B cell (primary cell): ENCODE measurements at regions of chr6 and their contacts with region 1.

Region 1: GRCh38 chr6:151390276-151391032 is 905 bp downstream of the ZBTB2 start:
- DNase-seq: peak; percentile 100
- ATAC-seq: peak; percentile 73
- H3K4me3 ChIP-seq: peak overlapping the region in 4 of 5 experiments; percentile 67 to 95 (median 82)
- H3K4me3 Mint-ChIP-seq: peak overlapping the region; percentile 99
- H3K27ac ChIP-seq: peak overlapping the region; percentile 77 to 97
- H3K27ac Mint-ChIP-seq: peak overlapping the region; percentile 98
- H3K4me1 ChIP-seq: peaks cover 38 to 39% of the 10 kb centered on the region in 2 donors
- H3K4me1 Mint-ChIP-seq: peaks cover 46% of the 10 kb centered on the region
- H3K27me3 ChIP-seq: no peaks in the 10 kb centered on the region
- H3K27me3 Mint-ChIP-seq: no peaks in the 10 kb centered on the region
- CTCF ChIP-seq: no peak

Region 2: GRCh38 chr6:151209071-151209831 is 181.2 kb before region 1 on chr6:
- CTCF ChIA-PET with region 1: no interaction called
- POLR2A ChIA-PET with region 1: no interaction called
- intact Hi-C with region 1: no loop called
- DNase-seq: no peak
- ATAC-seq: no peak
- H3K4me3 ChIP-seq: no peak overlapping the region
- H3K4me3 Mint-ChIP-seq: no peak overlapping the region
- H3K27ac ChIP-seq: no peak overlapping the region
- H3K27ac Mint-ChIP-seq: no peak overlapping the region
- H3K4me1 ChIP-seq: no peaks in the 10 kb centered on the region
- H3K4me1 Mint-ChIP-seq: no peaks in the 10 kb centered on the region
- H3K27me3 ChIP-seq: peaks cover 0 to 3% (median 0%) of the 10 kb centered on the region in 4 experiments
- H3K27me3 Mint-ChIP-seq: peaks cover 10% of the 10 kb centered on the region
- CTCF ChIP-seq: no peak

Region 3: DNA sequence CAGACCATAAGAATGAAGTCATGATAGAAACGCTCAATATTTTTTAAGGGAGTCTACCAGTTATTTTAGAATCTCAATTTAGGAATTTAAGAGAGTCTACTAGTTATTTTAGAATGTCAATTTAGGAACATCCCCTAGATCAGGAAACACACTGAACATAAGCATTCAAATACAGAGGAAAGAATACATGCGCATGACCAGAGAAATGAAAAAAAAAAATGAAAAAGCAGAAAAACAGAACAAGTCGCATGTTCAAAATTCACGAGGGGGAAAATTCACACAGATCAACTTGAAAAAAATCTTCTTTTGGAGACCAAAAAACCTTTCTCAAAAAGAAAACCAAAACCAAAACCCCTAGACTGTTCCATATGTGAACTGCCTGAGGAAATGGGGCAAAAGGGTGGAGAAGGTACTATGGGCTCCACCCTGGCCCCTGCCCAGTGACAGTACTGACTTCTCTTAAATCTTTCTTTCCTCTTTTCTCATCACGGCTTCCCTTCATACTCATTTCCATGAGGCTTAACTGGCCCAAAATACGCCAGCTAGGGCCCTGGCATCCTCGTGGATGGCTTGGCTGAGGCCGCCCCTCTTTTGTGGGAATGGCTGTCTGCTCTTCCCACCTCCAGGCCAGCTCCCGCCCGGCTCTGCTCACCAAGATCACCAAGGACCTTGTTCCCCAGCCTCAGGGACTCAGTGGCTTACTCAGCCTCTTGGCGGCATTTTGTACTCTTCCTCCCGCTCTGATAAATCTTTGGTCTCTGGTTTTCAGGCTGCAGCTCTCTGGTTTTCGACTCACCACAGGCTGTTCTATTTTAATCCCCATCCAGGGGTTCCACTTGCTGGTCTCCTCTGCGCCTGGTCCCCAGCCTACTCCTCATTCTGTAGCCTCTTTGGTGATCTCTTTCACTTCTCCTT is 10.3 kb before region 1 on chr6:
- CTCF ChIA-PET with region 1: no interaction called
- POLR2A ChIA-PET with region 1: interaction called, 3 read pairs
- intact Hi-C with region 1: loop called (anchors 1 kb)
- DNase-seq: peak; percentile 50
- ATAC-seq: peak; percentile 76
- H3K4me3 ChIP-seq: peak overlapping the region in 4 of 5 experiments; percentile 11 to 34 (median 24)
- H3K4me3 Mint-ChIP-seq: peak overlapping the region; percentile 68
- H3K27ac ChIP-seq: peak overlapping the region; percentile 58 to 66
- H3K27ac Mint-ChIP-seq: peak overlapping the region; percentile 84
- H3K4me1 ChIP-seq: peaks cover 43 to 46% of the 10 kb centered on the region in 2 donors
- H3K4me1 Mint-ChIP-seq: peaks cover 63% of the 10 kb centered on the region
- H3K27me3 ChIP-seq: no peaks in the 10 kb centered on the region
- H3K27me3 Mint-ChIP-seq: no peaks in the 10 kb centered on the region
- CTCF ChIP-seq: no peak

Region 4: GRCh38 chr6:151409260-151409659 is 18.8 kb after region 1 on chr6:
- CTCF ChIA-PET with region 1: interaction called, 25 read pairs
- POLR2A ChIA-PET with region 1: interaction called, 5 read pairs
- intact Hi-C with region 1: no loop called
- DNase-seq: no peak
- ATAC-seq: no peak
- H3K4me3 ChIP-seq: no peak overlapping the region
- H3K4me3 Mint-ChIP-seq: no peak overlapping the region
- H3K27ac ChIP-seq: peak overlapping the region in 1 of 2 donors; percentile 47
- H3K27ac Mint-ChIP-seq: peak overlapping the region; percentile 47
- H3K4me1 ChIP-seq: peaks cover 6 to 14% of the 10 kb centered on the region in 2 donors
- H3K4me1 Mint-ChIP-seq: peaks cover 19% of the 10 kb centered on the region
- H3K27me3 ChIP-seq: no peaks in the 10 kb centered on the region
- H3K27me3 Mint-ChIP-seq: no peaks in the 10 kb centered on the region
- CTCF ChIP-seq: no peak

Region 5: DNA sequence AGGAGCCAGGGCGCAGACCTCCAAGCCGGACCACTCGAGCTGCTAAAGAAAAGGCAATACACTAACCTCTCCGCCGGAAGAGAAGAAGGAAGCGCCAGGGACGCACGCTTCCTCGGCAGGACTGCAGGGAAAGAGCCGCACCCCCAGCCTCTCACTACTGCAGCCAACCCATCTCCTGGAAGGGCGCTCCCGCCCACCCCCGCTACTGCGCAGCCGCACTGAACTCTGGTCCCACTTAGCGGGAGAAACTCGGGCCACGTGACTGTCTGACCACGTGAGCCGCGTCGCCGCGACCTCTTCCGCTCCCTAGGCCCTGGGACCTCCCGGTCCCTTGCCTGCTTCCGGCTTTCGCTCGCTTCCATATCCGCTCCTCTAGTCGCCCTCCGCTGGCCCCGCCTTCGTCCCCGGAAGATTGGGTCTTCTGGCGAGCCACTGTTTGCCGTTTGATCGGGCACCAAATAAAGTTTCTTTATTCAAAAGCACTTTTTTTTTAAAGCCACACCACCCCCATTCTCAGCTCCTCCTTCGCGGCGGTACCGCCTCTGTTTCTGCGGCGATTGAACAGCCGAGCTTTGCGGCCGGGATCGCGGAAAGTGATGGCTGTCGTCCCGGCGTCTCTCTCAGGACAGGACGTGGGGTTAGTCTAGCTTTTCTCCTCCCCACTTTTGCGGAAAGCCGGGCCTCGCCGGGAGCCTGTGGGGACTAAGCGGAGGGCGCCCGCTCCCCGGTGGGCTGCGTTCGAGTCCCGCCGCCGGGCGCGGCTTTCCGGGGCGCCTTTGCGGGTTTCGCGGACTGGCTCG is 61.7 kb after region 1 on chr6 and contains the start of gene RMND1:
- CTCF ChIA-PET with region 1: interaction called, 11 read pairs
- POLR2A ChIA-PET with region 1: interaction called, 16 read pairs
- intact Hi-C with region 1: loop called (anchors 1 kb)
- DNase-seq: peak; percentile 100
- ATAC-seq: peak; percentile 94
- H3K4me3 ChIP-seq: peak within 1 kb of the TSS; percentile 74 to 94 (median 88)
- H3K4me3 Mint-ChIP-seq: peak within 1 kb of the TSS; percentile 97
- H3K27ac ChIP-seq: peak within 1 kb of the TSS; percentile 64 to 88
- H3K27ac Mint-ChIP-seq: peak within 1 kb of the TSS; percentile 88
- H3K4me1 ChIP-seq: peaks cover 18 to 20% of the 10 kb centered on the region in 2 donors
- H3K4me1 Mint-ChIP-seq: peaks cover 32% of the 10 kb centered on the region
- H3K27me3 ChIP-seq: no peaks in the 10 kb centered on the region
- H3K27me3 Mint-ChIP-seq: no peaks in the 10 kb centered on the region
- CTCF ChIP-seq: no peak
- total RNA-seq, gene RMND1: 15.7 and 19.8 TPM in 2 replicates

Region 6: DNA sequence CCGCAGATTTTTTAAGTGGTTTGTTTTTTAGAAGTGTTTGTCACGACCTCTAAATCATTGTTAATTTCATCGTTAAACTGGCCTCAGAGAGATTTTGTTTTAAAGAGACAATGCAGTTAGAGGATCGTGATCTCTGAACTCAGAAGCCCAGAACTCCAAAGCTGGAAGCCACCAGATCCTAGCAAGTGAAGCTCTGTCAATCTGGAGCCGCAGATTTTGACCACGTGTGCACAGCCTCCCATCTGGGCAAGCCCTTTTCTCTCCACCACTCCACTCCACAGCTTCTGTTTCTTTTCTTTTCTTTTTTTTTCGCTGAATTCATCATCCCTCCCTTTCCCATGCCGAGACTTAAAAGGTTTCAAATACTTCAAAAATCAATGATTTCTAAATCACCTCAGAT is 274.9 kb after region 1 on chr6:
- CTCF ChIA-PET with region 1: no interaction called
- POLR2A ChIA-PET with region 1: no interaction called
- intact Hi-C with region 1: no loop called
- DNase-seq: no peak
- ATAC-seq: no peak
- H3K4me3 ChIP-seq: no peak overlapping the region
- H3K4me3 Mint-ChIP-seq: no peak overlapping the region
- H3K27ac ChIP-seq: no peak overlapping the region
- H3K27ac Mint-ChIP-seq: no peak overlapping the region
- H3K4me1 ChIP-seq: no peaks in the 10 kb centered on the region
- H3K4me1 Mint-ChIP-seq: no peaks in the 10 kb centered on the region
- H3K27me3 ChIP-seq: no peaks in the 10 kb centered on the region
- H3K27me3 Mint-ChIP-seq: peaks cover 29% of the 10 kb centered on the region
- CTCF ChIP-seq: no peak

Region 7: DNA sequence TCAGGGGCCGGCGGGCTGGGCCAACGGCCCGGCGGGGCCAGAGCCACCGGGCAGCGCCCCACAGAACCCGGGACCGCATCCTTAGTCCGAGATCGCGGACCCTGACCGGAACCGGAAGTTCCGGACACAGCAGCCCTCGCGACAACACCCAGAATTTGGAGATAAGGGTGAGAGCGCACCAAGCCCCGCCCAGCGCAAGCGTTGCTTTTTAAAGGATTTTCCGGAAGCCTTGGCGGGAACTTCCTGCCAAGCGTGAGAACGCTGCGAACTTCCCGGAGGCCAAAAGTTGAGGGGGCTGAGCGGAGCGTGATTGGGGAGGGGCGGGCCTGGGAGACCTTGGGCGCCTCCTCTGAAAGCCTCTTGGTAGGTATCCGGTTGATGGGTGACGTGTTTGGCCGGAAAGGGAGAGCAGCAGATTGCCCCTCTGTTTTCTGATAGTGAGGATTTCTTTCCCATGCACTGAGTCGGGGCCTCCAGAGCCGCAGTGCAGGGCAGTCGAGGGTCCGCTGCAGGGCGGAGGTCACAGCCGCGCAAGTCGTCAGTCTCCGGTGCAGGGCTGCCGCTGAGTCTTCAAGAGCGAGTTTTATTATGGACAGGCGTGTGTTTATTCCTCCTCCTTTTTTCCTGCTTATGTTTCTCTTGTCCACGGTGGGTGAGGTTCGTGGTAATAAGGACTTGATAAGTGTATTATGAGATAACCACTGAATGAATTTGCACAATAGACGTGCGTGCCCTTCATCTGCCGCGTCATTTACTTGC is 1612.3 kb after region 1 on chr6 and contains the start of gene MTRF1L:
- CTCF ChIA-PET with region 1: no interaction called
- POLR2A ChIA-PET with region 1: no interaction called
- intact Hi-C with region 1: loop called (anchors 2 kb)
- DNase-seq: peak; percentile 91
- ATAC-seq: peak; percentile 86
- H3K4me3 ChIP-seq: peak within 1 kb of the TSS; percentile 71 to 94 (median 82)
- H3K4me3 Mint-ChIP-seq: peak within 1 kb of the TSS; percentile 100
- H3K27ac ChIP-seq: peak within 1 kb of the TSS; percentile 72 to 89
- H3K27ac Mint-ChIP-seq: peak within 1 kb of the TSS; percentile 96
- H3K4me1 ChIP-seq: peaks cover 20 to 25% of the 10 kb centered on the region in 2 donors
- H3K4me1 Mint-ChIP-seq: peaks cover 41% of the 10 kb centered on the region
- H3K27me3 ChIP-seq: no peaks in the 10 kb centered on the region
- H3K27me3 Mint-ChIP-seq: no peaks in the 10 kb centered on the region
- CTCF ChIP-seq: no peak
- total RNA-seq, gene MTRF1L: 23.0 and 24.0 TPM in 2 replicates